GM12878 (cell line): ENCODE measurements at regions of chr18 and their contacts with region 1.

Region 1: DNA sequence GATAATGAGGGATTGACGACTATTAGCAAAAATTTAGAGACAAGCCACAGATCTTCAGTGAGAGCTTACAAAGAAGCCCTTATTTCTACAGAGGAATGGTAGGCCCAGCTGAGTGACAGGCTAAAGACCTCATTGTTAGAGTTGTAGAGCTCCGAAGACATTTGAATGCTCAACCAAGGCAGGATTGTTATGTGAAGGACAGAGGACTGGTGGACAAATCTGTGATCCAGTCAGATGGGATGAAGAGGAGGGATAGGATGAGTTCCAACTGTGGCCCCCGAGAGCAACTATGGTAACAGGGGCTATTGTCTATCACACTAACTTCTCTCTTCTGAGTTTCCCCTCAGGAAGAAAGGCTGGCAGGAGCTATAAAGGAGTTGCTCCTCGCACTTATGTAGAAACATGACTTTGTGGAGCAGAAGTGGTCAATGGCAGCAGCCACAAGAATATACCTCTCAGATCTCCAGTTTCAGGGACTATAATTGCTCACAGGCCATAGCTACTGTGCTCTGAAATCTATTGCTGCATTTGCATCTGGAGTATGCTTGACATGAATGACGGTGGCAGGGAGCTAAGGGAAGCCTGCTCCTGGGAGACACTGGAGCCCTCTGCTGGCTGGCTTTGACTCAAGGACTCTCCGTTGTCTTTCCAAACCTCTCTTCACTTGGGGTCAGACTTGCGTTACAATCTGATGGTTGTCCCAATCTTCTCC is 50.3 kb upstream of the GREB1L start:
- DNase-seq: no peak
- ATAC-seq: peak; percentile 54
- H3K4me3 ChIP-seq: no peak overlapping the region
- H3K27ac ChIP-seq: no peak overlapping the region
- H3K4me1 ChIP-seq: no peaks in the 10 kb centered on the region
- H3K27me3 ChIP-seq: no peaks in the 10 kb centered on the region
- CTCF ChIP-seq: peak; percentile 26 to 40 (median 33); a peak in 4 of 6 replicates
- EP300 ChIP-seq: no peak
- POLR2A ChIP-seq: no peak
- RAD21 ChIP-seq: peak; percentile 26; the same call in 1 of the 2 replicates

Region 2: DNA sequence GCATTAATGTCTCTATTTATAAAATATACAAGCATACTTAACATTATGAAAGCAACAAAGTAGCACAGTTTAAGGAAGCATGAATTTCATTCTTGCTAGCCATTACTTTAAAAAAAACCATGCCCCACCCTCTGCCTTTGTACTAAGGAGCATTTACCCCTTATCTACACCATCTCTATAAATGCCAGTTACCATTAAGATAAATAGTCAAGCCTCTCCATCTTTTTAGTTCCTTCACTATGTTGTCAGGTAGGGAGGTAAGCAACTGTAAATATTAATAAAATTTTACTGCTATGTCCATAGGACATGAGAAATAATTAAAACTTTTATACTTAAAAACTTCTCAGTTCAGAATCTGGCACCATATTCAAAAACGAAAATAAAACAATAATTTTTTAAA is 122.3 kb before region 1 on chr18:
- CTCF ChIA-PET with region 1: no interaction called
- POLR2A ChIA-PET with region 1: no interaction called
- RAD21 ChIA-PET with region 1: no interaction called
- SMC1A ChIA-PET with region 1: no interaction called
- in situ Hi-C with region 1: no loop called
- intact Hi-C with region 1: no loop called
- DNase-seq: no peak
- ATAC-seq: no peak
- H3K4me3 ChIP-seq: no peak overlapping the region
- H3K27ac ChIP-seq: no peak overlapping the region
- H3K4me1 ChIP-seq: no peaks in the 10 kb centered on the region
- H3K27me3 ChIP-seq: no peaks in the 10 kb centered on the region
- CTCF ChIP-seq: no peak
- EP300 ChIP-seq: no peak
- POLR2A ChIP-seq: no peak
- RAD21 ChIP-seq: no peak

Region 3: DNA sequence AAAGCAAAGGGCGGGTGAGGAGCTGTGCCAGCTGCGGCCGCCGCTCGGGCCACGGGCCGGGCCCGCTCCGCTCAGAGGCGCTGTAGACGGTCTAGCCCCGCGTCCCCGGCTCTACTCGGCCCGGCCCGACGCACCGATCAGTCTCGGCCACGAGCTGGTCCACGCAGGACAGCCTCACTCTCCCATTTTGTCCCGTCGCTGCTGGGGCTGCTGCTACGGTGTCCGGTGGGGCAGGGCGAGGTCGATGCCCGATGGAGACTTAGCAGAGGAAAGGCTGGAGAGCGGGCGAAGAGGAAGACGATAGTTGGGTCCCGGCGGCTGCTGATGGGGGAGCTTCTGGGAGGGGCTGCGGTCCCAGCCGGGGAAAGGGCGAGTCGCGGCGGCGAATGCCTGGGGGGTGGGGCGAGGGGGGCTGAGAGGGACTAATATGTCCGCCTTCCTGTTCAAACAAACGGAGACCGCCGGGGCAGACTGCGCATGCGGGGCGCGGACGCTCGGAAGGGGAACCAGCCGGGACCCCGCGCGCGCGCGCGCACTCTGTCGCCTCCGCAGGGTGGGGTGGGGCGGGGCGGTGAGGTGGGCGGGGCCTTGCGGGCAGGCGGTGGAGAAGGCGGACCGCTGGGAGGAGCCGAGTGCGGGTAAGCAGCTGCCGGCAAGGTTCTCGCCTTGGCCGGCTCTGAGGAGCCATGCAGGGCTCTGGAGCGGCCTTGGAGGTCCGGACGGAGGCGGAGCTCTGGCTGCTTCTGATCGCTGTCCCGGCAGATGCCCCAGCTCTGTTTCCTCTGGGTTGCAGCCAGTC is 80.2 kb before region 1 on chr18 and contains the start of gene ROCK1:
- CTCF ChIA-PET with region 1: no interaction called
- POLR2A ChIA-PET with region 1: no interaction called
- RAD21 ChIA-PET with region 1: no interaction called
- SMC1A ChIA-PET with region 1: no interaction called
- in situ Hi-C with region 1: no loop called
- intact Hi-C with region 1: no loop called
- DNase-seq: peak; percentile 65
- ATAC-seq: peak; percentile 91
- H3K4me3 ChIP-seq: peak within 1 kb of the TSS; percentile 92
- H3K27ac ChIP-seq: peak within 1 kb of the TSS; percentile 96
- H3K4me1 ChIP-seq: no peaks in the 10 kb centered on the region
- H3K27me3 ChIP-seq: no peaks in the 10 kb centered on the region
- CTCF ChIP-seq: no peak
- EP300 ChIP-seq: no peak
- POLR2A ChIP-seq: peak; percentile 73; the same call in 1 of the 2 replicates
- RAD21 ChIP-seq: no peak
- polyA plus RNA-seq, gene ROCK1: 14.8 to 15.1 TPM

Region 4: GRCh38 chr18:21168880-21169279 is 22.9 kb before region 1 on chr18:
- CTCF ChIA-PET with region 1: no interaction called
- POLR2A ChIA-PET with region 1: no interaction called
- RAD21 ChIA-PET with region 1: no interaction called
- SMC1A ChIA-PET with region 1: no interaction called
- in situ Hi-C with region 1: no loop called
- intact Hi-C with region 1: no loop called
- DNase-seq: no peak
- ATAC-seq: no peak
- H3K4me3 ChIP-seq: no peak overlapping the region
- H3K27ac ChIP-seq: no peak overlapping the region
- H3K4me1 ChIP-seq: no peaks in the 10 kb centered on the region
- H3K27me3 ChIP-seq: no peaks in the 10 kb centered on the region
- CTCF ChIP-seq: no peak
- EP300 ChIP-seq: no peak
- POLR2A ChIP-seq: no peak
- RAD21 ChIP-seq: no peak

Region 5: DNA sequence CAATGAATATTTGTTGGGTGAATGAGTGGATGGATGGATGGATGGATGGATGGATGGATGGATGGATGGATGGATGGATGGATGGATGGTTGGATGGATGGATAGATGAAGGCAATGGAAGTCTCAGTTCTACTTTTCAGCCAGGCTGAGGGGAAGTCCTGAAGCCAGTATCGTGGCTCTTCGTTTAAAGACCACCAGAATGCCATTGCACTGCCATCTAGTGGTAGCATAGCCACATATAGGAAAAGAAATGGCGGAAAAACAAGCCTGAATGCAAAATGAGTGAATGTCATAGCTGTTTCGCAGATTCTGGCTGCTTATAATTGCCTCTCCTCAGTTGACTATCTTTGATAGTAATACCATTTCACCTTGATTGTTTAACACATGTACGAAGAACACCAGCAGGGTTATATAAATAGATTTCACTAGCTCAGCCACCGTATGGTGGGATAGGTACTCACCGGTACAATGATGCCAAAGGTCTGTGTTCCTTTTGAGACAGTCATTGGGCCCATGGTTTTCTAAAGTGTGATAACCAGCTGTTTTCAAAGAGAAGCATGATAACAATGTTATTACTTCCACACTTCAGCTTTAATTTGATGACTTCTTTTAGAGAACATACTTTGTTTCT is 12.0 kb before region 1 on chr18:
- CTCF ChIA-PET with region 1: interaction called, 17 read pairs
- POLR2A ChIA-PET with region 1: no interaction called
- RAD21 ChIA-PET with region 1: interaction called, 3 read pairs
- SMC1A ChIA-PET with region 1: interaction called, 9 read pairs
- in situ Hi-C with region 1: no loop called
- intact Hi-C with region 1: no loop called
- DNase-seq: peak; percentile 32
- ATAC-seq: peak; percentile 94
- H3K4me3 ChIP-seq: no peak overlapping the region
- H3K27ac ChIP-seq: no peak overlapping the region
- H3K4me1 ChIP-seq: no peaks in the 10 kb centered on the region
- H3K27me3 ChIP-seq: no peaks in the 10 kb centered on the region
- CTCF ChIP-seq: peak; percentile 78 to 85 (median 78)
- EP300 ChIP-seq: no peak
- POLR2A ChIP-seq: no peak
- RAD21 ChIP-seq: peak; percentile 83

Region 6: DNA sequence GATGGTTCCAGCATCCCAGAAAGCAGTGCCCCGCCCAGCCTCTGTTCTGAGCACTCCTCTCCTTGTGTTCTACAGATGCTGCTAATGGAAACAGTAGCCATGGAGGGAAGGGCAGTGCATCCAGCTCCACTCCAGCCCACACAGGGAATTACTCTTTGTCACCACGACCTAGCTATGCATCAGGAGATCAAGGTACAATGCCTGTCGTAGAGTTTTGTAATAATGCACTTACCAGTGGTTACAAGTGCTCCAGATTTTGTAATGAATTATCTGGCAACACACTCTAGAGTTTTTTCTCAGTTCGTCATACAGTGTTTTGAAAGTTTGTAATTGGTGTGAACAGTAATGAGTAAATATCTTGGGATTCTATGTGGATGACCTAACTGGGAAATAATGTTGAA is 247.7 kb after region 1 on chr18:
- CTCF ChIA-PET with region 1: interaction called, 53 read pairs
- POLR2A ChIA-PET with region 1: interaction called, 10 read pairs
- RAD21 ChIA-PET with region 1: interaction called, 6 read pairs
- SMC1A ChIA-PET with region 1: interaction called, 19 read pairs
- in situ Hi-C with region 1: no loop called
- intact Hi-C with region 1: loop called (anchors 1 kb)
- DNase-seq: no peak
- ATAC-seq: no peak
- H3K4me3 ChIP-seq: no peak overlapping the region
- H3K27ac ChIP-seq: no peak overlapping the region
- H3K4me1 ChIP-seq: no peaks in the 10 kb centered on the region
- H3K27me3 ChIP-seq: no peaks in the 10 kb centered on the region; a peak in 1 of 4 replicates
- CTCF ChIP-seq: no peak
- EP300 ChIP-seq: no peak
- POLR2A ChIP-seq: no peak
- RAD21 ChIP-seq: no peak

Region 7: DNA sequence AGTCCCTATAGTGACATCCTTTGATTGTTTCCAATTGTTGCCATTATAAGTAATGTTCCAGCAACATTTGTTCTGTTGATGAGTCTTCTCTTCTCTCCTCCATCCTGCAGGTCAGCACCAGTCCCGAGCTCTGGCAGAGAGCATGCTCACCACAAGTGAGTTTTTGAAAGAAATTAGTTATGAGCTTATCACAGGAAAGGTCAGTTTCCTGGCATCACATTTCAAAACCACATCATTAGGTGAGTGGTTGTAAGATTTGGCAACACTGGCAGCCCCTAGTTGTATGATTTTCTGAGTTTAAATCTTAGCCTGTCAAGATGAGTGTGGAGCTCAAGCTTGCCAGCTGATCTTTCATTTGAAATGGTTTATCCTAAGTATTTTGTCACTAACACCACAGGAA is 259.2 kb after region 1 on chr18:
- CTCF ChIA-PET with region 1: interaction called, 53 read pairs
- POLR2A ChIA-PET with region 1: no interaction called
- RAD21 ChIA-PET with region 1: interaction called, 3 read pairs
- SMC1A ChIA-PET with region 1: interaction called, 19 read pairs
- in situ Hi-C with region 1: loop called (anchors 5 kb)
- intact Hi-C with region 1: no loop called
- DNase-seq: no peak
- ATAC-seq: peak; percentile 41
- H3K4me3 ChIP-seq: no peak overlapping the region
- H3K27ac ChIP-seq: no peak overlapping the region
- H3K4me1 ChIP-seq: no peaks in the 10 kb centered on the region
- H3K27me3 ChIP-seq: no peaks in the 10 kb centered on the region; a peak in 1 of 4 replicates
- CTCF ChIP-seq: no peak
- EP300 ChIP-seq: no peak
- POLR2A ChIP-seq: no peak
- RAD21 ChIP-seq: no peak

Region 8: GRCh38 chr18:21513292-21513691 is 321.5 kb after region 1 on chr18:
- CTCF ChIA-PET with region 1: interaction called, 3 read pairs
- POLR2A ChIA-PET with region 1: no interaction called
- RAD21 ChIA-PET with region 1: no interaction called
- SMC1A ChIA-PET with region 1: no interaction called
- in situ Hi-C with region 1: no loop called
- intact Hi-C with region 1: loop called (anchors 10 kb)
- DNase-seq: no peak
- ATAC-seq: no peak
- H3K4me3 ChIP-seq: no peak overlapping the region
- H3K27ac ChIP-seq: no peak overlapping the region
- H3K4me1 ChIP-seq: no peaks in the 10 kb centered on the region
- H3K27me3 ChIP-seq: no peaks in the 10 kb centered on the region
- CTCF ChIP-seq: no peak
- EP300 ChIP-seq: no peak
- POLR2A ChIP-seq: no peak
- RAD21 ChIP-seq: no peak

Region 9: DNA sequence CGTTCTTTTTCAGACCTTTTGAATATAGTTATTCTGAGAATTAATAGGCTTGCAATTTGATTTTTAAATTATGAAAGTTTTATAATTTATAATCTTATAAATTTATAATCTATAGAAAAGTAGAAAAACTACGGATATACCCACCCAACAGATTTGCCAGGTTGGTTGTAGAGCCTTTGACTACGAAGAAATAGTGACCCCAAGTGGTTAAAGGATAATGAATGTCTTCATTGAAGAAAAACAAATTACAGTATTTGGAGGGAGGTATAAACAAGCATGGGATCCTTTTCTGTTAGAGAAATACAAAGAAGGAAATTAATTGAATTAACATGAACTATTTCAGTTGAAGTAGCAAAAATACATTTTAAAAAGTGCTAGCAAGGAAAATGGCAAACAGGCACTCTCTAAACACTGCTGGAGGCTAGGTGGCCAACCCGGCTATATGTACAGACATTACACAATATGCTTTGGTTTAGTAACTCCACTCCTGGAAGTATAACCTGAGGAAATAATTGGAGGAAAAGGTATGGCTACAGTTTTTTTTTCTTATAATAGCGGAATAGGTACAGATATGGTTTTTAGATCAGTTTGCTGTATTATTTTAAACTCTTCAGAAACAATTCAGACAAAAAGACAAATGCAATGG is 659.7 kb after region 1 on chr18:
- CTCF ChIA-PET with region 1: interaction called, 8 read pairs
- POLR2A ChIA-PET with region 1: no interaction called
- RAD21 ChIA-PET with region 1: interaction called, 3 read pairs
- SMC1A ChIA-PET with region 1: no interaction called
- in situ Hi-C with region 1: no loop called
- intact Hi-C with region 1: loop called (anchors 10 kb)
- DNase-seq: no peak
- ATAC-seq: peak; percentile 65
- H3K4me3 ChIP-seq: no peak overlapping the region
- H3K27ac ChIP-seq: no peak overlapping the region
- H3K4me1 ChIP-seq: peaks cover 13% of the 10 kb centered on the region
- H3K27me3 ChIP-seq: no peaks in the 10 kb centered on the region
- CTCF ChIP-seq: peak in 2 of 3 experiments; percentile 38 to 50; a peak in 4 of 6 replicates
- EP300 ChIP-seq: no peak
- POLR2A ChIP-seq: no peak
- RAD21 ChIP-seq: peak; percentile 78

Region 10: DNA sequence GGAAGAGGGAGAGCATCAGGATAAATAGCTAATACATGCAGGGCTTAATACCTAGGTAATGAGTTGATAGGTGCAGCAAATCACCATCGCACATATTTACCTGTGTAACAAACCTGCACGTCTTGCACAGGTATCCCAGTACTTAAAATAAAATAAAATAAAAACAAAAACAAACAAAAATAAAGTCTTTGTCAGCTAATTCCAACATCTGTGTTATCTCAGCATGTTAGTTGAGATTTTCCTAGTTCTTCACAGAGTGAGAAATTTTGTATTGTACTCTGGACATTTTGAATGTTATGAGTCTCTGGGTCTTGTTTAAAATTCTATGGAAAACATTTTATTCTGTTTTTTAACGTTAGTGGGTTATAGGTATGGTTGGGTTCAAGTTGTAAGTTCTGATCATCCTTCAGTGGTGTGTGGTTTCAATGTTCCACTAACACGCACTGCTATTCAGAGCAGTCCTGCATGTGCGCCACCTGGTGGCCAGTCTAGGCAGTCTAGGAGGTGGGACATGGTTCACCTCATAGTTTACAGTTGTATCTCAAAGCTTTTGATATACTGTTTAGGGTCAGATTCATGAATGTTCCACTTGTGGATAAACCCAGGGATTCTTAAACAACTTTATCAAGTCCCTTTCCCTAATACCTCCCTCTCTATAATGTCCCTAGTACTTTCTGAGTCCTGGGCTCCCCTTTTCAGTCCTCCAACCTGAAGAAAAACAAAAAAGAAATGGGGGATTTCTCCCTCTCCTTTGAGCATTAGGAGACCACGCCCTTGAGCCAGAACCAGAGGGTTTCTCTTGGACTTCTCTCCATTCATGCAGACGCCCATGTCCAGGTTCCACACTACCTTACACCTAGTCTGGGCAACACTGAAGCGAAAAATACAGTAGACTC is 764.3 kb after region 1 on chr18:
- CTCF ChIA-PET with region 1: interaction called, 16 read pairs
- POLR2A ChIA-PET with region 1: no interaction called
- RAD21 ChIA-PET with region 1: no interaction called
- SMC1A ChIA-PET with region 1: no interaction called
- in situ Hi-C with region 1: loop called (anchors 10 kb)
- intact Hi-C with region 1: loop called (anchors 1 kb)
- DNase-seq: peak; percentile 4
- ATAC-seq: peak; percentile 100
- H3K4me3 ChIP-seq: no peak overlapping the region
- H3K27ac ChIP-seq: no peak overlapping the region
- H3K4me1 ChIP-seq: no peaks in the 10 kb centered on the region
- H3K27me3 ChIP-seq: no peaks in the 10 kb centered on the region
- CTCF ChIP-seq: peak; percentile 86 to 94 (median 92)
- EP300 ChIP-seq: no peak
- POLR2A ChIP-seq: no peak
- RAD21 ChIP-seq: peak; percentile 73